ENCODE measurements at regions of chr17 and their contacts with region 1.

Region 1: DNA sequence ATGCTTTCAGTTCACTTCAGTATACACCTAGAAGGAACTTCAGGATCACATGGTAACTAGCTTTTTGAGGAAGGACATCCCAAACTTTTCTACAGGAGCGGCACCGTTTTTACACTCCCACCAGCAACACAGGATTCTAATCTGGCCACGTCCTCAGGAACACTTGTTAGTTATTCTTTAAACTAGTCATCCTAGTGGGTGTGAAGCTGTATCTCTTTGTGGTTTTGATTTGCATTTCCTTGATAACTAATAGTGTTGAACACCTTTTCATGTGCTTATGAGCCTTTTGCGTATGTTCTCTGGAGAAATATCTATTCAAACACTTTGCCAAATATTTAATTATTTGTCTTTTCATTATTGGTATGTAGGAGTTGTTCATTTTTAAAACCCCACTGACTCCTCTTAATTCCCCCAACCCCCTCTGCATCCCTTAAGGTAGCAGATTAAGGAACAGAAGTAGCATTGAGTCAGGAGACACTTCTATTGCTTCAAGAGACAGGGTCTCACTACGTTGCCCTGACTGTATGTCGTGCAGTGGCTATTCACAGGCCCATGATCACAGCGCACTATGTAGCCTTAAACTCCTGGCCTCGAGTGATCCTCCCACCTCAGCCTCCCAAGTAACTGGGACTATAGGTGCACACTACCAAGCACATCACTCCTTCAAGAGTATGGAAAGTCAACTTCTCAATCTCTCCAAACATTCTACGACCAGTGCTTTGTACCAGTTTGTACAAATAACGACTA is 25.4 kb downstream of the YWHAE start:
- DNase-seq: no peak
- ATAC-seq: peak; percentile 61
- H3K4me3 ChIP-seq: no peak overlapping the region
- H3K27ac ChIP-seq: no peak overlapping the region
- H3K4me1 ChIP-seq: peaks cover 65% of the 10 kb centered on the region
- H3K27me3 ChIP-seq: no peaks in the 10 kb centered on the region
- CTCF ChIP-seq: no peak
- EP300 ChIP-seq: 0 out of 4 replicates have a peak, but pooled peaks of 1 of the 2 experiments have one; percentile 29
- POLR2A ChIP-seq: no peak
- RAD21 ChIP-seq: no peak

Region 2: DNA sequence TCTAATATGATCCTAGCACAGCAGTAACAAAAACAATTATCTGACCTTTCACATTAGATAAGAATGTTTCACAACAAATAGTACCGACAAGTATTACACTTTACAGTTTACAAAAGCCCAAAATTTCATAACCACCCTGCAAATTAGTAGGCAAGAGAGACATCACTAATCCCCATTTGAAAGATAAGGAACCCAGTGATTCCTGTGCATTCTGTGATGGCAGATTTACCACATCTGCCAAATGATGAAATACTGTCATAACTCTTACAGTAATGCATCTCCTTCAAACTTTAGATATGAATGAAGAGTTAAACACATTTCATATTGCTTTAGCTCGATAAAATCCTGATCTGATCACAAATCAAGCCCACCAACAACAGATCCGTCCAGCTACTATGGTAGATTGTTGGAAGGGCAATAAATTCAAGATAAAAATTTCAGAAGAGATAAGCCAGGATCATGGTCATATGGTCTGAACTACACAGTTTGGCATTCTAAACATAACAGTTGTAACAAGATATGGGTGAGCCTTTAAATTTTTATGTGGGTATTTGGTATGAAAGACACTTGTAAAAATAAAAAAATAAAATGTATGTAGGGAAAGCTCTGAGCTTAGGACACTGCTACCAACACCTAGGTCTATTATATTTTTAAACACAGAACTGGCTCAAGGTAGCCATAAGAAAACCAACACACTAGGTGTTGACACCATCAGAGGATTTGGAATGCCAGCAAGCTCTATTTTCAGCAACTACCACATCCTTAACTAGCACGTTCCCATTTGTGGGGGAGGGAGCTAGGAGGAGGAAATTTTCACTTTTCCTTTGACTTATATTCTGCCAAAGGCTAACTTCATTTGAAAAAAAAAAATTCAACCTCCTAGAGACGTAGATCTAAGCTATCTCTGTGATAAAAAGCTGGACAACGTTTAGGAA is 16.1 kb after region 1 on chr17:
- CTCF ChIA-PET with region 1: interaction called, 16 read pairs
- POLR2A ChIA-PET with region 1: interaction called, 28 read pairs
- RAD21 ChIA-PET with region 1: interaction called, 3 read pairs
- SMC1A ChIA-PET with region 1: interaction called, 61 read pairs
- in situ Hi-C with region 1: no loop called
- intact Hi-C with region 1: no loop called
- DNase-seq: no peak
- ATAC-seq: no peak
- H3K4me3 ChIP-seq: 0 out of 2 replicates have a peak overlapping the region, but pooled peaks have one; percentile 5
- H3K27ac ChIP-seq: no peak overlapping the region
- H3K4me1 ChIP-seq: no peaks in the 10 kb centered on the region; the same call in 1 of the 2 replicates
- H3K27me3 ChIP-seq: no peaks in the 10 kb centered on the region
- CTCF ChIP-seq: no peak
- EP300 ChIP-seq: no peak
- POLR2A ChIP-seq: no peak
- RAD21 ChIP-seq: no peak

Region 3: GRCh38 chr17:1399679-1400512 is 25.3 kb after region 1 on chr17 and contains the start of gene YWHAE:
- CTCF ChIA-PET with region 1: interaction called, 8 read pairs
- POLR2A ChIA-PET with region 1: interaction called, 17 read pairs
- RAD21 ChIA-PET with region 1: interaction called, 10 read pairs
- SMC1A ChIA-PET with region 1: interaction called, 24 read pairs
- in situ Hi-C with region 1: no loop called
- intact Hi-C with region 1: no loop called
- DNase-seq: peak; percentile 62
- ATAC-seq: peak; percentile 96
- H3K4me3 ChIP-seq: peak within 1 kb of the TSS; percentile 83
- H3K27ac ChIP-seq: peak within 1 kb of the TSS; percentile 93
- H3K4me1 ChIP-seq: no peaks in the 10 kb centered on the region
- H3K27me3 ChIP-seq: no peaks in the 10 kb centered on the region
- CTCF ChIP-seq: no peak
- EP300 ChIP-seq: no peak
- POLR2A ChIP-seq: peak; percentile 98
- RAD21 ChIP-seq: no peak
- polyA plus RNA-seq, gene YWHAE: 369 to 425 TPM

Region 4: DNA sequence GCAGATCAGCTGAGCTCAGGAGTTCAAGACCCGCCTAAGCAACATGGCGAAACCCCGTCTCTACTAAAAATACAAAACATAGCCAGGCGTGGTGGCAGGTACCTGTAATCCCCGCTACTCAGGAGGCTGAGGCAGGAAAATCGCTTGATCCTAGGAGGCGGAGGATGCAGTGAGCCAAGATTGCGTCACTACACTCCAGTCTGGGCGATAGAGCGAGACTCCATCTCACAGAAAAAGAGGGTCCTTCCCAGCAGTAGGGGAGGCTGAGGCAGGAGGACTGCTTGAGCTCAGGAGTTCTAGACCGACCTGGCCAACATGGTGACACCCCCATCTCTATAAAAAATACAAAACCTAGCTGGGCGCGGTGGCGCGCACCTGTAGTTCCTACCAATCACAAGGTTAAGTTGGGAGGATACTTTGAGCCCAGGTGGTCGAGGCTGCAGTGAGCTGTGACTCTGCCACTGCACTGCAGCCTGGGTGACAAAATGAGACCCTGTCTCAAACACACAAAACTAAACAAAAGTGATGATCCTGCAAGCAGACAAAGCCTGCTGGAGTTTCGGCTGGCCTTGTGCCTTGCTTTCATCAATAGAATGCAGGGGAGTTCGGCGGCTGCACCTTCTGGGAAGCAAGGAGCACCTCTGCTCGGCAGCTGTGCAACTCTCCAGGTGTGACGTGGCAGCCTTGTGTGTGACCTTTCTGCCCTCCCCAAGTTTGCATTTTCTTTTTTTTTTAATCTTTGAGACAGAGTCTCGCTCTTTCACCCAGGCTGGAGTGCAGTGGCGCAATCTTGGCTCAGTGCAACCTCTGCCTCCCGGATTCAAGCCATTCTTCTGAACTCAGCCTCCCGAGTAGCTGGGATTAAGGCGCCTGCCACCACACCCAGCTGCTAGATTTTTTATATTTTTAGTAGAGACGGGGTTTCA is 37.8 kb after region 1 on chr17:
- CTCF ChIA-PET with region 1: no interaction called
- POLR2A ChIA-PET with region 1: no interaction called
- RAD21 ChIA-PET with region 1: no interaction called
- SMC1A ChIA-PET with region 1: no interaction called
- in situ Hi-C with region 1: no loop called
- intact Hi-C with region 1: no loop called
- DNase-seq: no peak
- ATAC-seq: no peak
- H3K4me3 ChIP-seq: no peak overlapping the region
- H3K27ac ChIP-seq: no peak overlapping the region
- H3K4me1 ChIP-seq: no peaks in the 10 kb centered on the region
- H3K27me3 ChIP-seq: no peaks in the 10 kb centered on the region
- CTCF ChIP-seq: no peak
- EP300 ChIP-seq: no peak
- POLR2A ChIP-seq: no peak
- RAD21 ChIP-seq: no peak

Region 5: GRCh38 chr17:1480747-1481465 is 106.3 kb after region 1 on chr17:
- CTCF ChIA-PET with region 1: no interaction called
- POLR2A ChIA-PET with region 1: no interaction called
- RAD21 ChIA-PET with region 1: no interaction called
- SMC1A ChIA-PET with region 1: no interaction called
- in situ Hi-C with region 1: no loop called
- intact Hi-C with region 1: no loop called
- DNase-seq: no peak
- ATAC-seq: no peak
- H3K4me3 ChIP-seq: no peak overlapping the region
- H3K27ac ChIP-seq: no peak overlapping the region
- H3K4me1 ChIP-seq: peaks cover 8% of the 10 kb centered on the region
- H3K27me3 ChIP-seq: no peaks in the 10 kb centered on the region
- CTCF ChIP-seq: no peak
- EP300 ChIP-seq: no peak
- POLR2A ChIP-seq: no peak
- RAD21 ChIP-seq: no peak

Region 6: DNA sequence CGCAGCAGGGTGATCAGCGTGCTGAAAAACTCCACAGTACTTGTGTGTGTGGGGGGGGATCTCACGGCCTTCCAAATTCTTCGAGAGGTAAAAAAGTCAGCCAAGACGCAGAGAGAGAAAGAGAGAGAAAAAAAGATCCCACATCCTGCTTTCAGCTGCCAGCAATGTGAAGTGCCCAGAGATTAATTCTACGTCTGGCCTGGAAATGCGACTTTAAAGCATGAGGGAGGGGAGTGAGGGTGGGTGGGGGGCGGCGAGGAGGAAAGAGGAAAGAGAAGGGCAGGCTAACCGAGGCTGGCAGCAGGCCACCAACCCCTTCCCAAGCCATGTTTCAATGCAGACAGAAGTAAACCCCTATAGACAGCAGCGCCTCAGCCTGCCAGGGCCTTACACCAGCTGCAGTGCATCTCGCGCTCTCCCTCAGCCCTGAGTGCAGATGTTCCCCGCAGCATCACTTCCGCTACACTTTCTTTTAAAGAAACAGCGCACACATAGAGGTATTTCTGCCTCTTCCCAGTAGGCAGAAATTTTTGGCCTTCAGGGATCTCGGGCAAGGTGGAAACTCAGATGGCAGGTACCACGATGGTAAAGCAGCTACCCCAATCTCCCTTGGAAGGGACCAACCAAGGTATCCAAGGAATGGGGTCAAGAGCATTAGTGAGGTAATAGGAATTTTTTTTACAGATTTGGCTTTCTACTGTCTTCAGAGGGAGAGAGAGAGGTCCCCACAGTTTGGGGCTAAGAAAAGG is 841.2 kb after region 1 on chr17:
- CTCF ChIA-PET with region 1: no interaction called
- POLR2A ChIA-PET with region 1: no interaction called
- RAD21 ChIA-PET with region 1: no interaction called
- SMC1A ChIA-PET with region 1: no interaction called
- in situ Hi-C with region 1: no loop called
- intact Hi-C with region 1: no loop called
- DNase-seq: no peak
- ATAC-seq: peak; percentile 99
- H3K4me3 ChIP-seq: peak overlapping the region; percentile 77
- H3K27ac ChIP-seq: peak overlapping the region; percentile 100
- H3K4me1 ChIP-seq: peaks cover 32% of the 10 kb centered on the region
- H3K27me3 ChIP-seq: no peaks in the 10 kb centered on the region
- CTCF ChIP-seq: 0 out of 6 replicates have a peak, but pooled peaks of 1 of the 3 experiments have one; percentile 6
- EP300 ChIP-seq: no peak
- POLR2A ChIP-seq: peak; percentile 90
- RAD21 ChIP-seq: 0 out of 2 replicates have a peak, but pooled peaks have one; percentile 1

Measured in GM12878 (cell line).